ENCODE measurements at regions of chr4 and their contacts with region 1.

Region 1: GRCh38 chr4:118816538-118817177 is 19.3 kb downstream of the SEC24D start:
- DNase-seq: no peak
- ATAC-seq: no peak

Region 2: DNA sequence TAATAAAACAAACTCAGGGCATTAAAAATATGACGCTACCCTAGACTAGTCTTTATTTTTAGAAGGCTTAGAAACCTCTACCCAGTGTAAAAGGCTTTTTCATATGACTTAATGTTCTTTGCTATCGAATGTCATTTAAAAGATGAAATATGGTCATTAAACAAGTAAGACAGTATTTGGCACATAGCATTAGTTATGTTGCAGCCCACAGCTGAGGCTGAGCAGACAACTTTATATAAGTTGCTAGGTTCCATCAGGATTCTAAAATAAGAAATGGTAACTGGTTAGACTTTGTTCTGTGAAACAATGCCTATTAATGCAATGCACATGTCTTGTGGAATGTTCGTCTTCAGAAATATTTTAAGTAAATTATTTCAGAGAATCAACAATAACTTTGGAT is 453.5 kb before region 1 on chr4:
- intact Hi-C with region 1: loop called (anchors 5 kb)
- DNase-seq: no peak
- ATAC-seq: no peak